GM12878 (cell line): ENCODE measurements at regions of chr12 and their contacts with region 1.

Region 1: GRCh38 chr12:115998119-115998633 is 279.3 kb downstream of the MED13L start:
- DNase-seq: no peak
- ATAC-seq: peak; percentile 68
- H3K4me3 ChIP-seq: no peak overlapping the region
- H3K27ac ChIP-seq: no peak overlapping the region
- H3K4me1 ChIP-seq: peaks cover 3% of the 10 kb centered on the region
- H3K27me3 ChIP-seq: no peaks in the 10 kb centered on the region
- CTCF ChIP-seq: peak; percentile 56 to 65 (median 64)
- EP300 ChIP-seq: no peak
- POLR2A ChIP-seq: no peak
- RAD21 ChIP-seq: peak; percentile 59

Region 2: GRCh38 chr12:115916910-115917668 is 81.1 kb before region 1 on chr12:
- CTCF ChIA-PET with region 1: no interaction called
- POLR2A ChIA-PET with region 1: no interaction called
- RAD21 ChIA-PET with region 1: no interaction called
- SMC1A ChIA-PET with region 1: no interaction called
- in situ Hi-C with region 1: no loop called
- intact Hi-C with region 1: no loop called
- DNase-seq: no peak
- ATAC-seq: peak; percentile 95
- H3K4me3 ChIP-seq: no peak overlapping the region
- H3K27ac ChIP-seq: no peak overlapping the region
- H3K4me1 ChIP-seq: no peaks in the 10 kb centered on the region
- H3K27me3 ChIP-seq: no peaks in the 10 kb centered on the region
- CTCF ChIP-seq: peak; percentile 85 to 96 (median 93)
- EP300 ChIP-seq: no peak
- POLR2A ChIP-seq: no peak
- RAD21 ChIP-seq: peak; percentile 83

Region 3: DNA sequence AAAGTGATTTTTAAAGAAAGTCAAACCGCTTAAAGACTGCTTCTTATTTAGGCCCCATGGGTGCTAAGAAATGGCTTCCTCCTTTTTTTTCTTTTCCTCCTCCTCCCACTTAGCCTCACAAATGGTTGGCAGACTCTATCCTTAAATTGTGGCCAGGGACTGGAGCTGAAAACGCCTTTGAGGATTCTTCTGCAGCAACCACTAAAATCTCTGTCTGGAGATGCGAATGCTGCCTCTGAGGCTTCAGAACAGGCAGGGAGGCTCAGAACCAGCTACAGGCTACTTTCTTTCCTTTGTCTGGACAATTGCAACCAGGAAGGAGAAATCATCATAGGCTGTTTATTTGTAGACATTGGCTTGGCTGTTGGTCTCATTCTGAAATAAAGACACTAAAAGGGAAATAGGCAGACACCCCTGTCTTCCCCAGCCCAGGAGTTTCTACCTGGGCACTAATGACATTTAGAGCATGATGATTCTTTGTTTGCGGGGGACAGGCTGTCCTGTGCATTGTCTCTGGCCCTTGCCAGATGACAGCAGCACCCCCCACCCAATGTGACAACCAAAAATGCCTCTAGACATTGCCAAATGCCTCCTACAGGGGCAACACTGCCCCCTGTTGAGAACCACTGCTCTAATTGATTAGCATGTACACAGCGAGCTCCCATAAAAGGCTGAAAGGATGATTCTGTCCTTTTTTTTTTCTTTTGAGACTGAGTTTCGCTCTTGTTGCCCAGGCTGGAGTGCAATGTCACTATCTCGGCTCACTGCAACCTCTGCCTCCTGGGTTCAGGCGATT is 611.3 kb after region 1 on chr12:
- CTCF ChIA-PET with region 1: interaction called, 6 read pairs
- POLR2A ChIA-PET with region 1: no interaction called
- RAD21 ChIA-PET with region 1: no interaction called
- SMC1A ChIA-PET with region 1: no interaction called
- in situ Hi-C with region 1: no loop called
- intact Hi-C with region 1: loop called (anchors 5 kb)
- DNase-seq: no peak
- ATAC-seq: peak; percentile 50
- H3K4me3 ChIP-seq: no peak overlapping the region
- H3K27ac ChIP-seq: no peak overlapping the region
- H3K4me1 ChIP-seq: no peaks in the 10 kb centered on the region
- H3K27me3 ChIP-seq: peaks cover 0 to 4% of the 10 kb centered on the region in 2 experiments
- CTCF ChIP-seq: peak; percentile 21 to 37 (median 35); a peak in 3 of 6 replicates
- EP300 ChIP-seq: no peak
- POLR2A ChIP-seq: no peak
- RAD21 ChIP-seq: peak; percentile 61